ENCODE measurements at regions of chr6 and their contacts with region 1.

Region 1: GRCh38 chr6:148947621-148948444 is 201.0 kb downstream of the UST start:
- DNase-seq: peak; percentile 78
- ATAC-seq: peak; percentile 87

Region 2: DNA sequence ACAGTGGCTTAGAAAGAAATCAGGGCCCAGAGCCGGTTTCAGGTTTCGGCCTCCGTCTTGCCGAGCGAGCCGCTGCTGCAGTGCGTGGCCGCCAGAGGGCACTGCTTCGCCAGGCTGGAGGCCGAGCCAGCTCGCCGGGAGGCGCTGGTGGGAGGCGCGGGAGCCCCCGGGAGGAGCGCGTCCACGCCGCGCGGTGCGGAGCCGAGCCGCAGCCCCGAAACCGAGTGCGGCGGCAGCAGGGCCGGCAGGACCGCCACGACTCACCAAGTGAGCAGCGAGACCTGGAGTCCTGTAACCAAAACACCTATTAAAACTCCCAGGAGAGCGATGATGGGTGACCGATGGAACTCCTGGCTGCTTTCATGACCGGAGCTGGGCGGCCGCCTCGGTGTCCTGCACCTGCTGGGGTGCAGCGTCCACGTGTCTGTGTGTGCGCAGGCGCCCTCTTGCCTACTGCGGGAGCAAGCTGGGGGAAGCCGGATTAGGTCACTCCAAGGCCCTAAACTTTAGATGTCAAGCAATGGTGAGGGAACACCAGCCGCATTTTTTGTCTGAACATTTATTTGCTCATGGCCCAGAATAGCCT is 387.9 kb before region 1 on chr6:
- intact Hi-C with region 1: loop called (anchors 5 kb)
- DNase-seq: peak; percentile 89
- ATAC-seq: peak; percentile 84

Region 3: GRCh38 chr6:148608199-148608951 is 339.5 kb before region 1 on chr6:
- intact Hi-C with region 1: no loop called
- DNase-seq: no peak
- ATAC-seq: no peak

Region 4: GRCh38 chr6:148746363-148747144 is 201.3 kb before region 1 on chr6 and contains the start of gene UST:
- intact Hi-C with region 1: loop called (anchors 1 kb)
- DNase-seq: peak; percentile 88
- ATAC-seq: peak; percentile 93
- total RNA-seq, gene UST: 4.4 TPM

Measured in Right ventricle myocardium inferior (tissue), 1 donor.